ENCODE measurements at regions of chr3 and their contacts with region 1.

Region 1: DNA sequence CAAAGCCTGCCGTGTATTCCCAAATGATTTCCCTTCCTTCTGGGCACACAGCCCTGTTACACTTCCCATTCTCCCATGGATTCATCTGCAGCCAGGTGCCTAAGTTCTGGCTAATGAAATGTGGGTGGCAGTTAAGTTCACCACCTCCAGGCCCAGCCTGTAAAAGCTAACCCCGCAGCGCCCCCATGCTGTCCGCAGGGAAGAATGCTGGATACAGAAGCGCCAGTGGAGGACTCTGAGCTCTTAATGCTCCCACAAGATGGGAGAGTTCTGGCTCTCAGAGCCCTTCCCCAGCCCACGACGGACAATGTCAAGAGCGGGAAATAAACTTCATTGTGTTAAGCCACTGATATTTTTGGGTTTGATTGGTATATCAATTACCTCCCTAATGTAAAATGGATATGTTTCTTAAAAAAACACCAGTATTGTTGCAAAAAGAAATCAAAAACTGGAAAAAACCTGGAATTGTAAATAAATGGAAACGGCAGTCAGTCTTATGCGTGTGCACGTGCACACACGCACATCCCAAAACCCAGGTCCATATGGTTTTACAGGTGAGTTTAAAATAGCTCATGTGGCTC is 37.7 kb upstream of the FGD5 start:
- DNase-seq: peak; percentile 62
- H3K4me3 Mint-ChIP-seq: no peak overlapping the region
- H3K27ac Mint-ChIP-seq: no peak overlapping the region
- H3K4me1 Mint-ChIP-seq: no peaks in the 10 kb centered on the region
- H3K27me3 Mint-ChIP-seq: peaks cover 40% of the 10 kb centered on the region

Region 2: GRCh38 chr3:14633819-14634424 is 147.1 kb before region 1 on chr3:
- CTCF ChIA-PET with region 1: interaction called, 20 read pairs
- DNase-seq: peak; percentile 69
- H3K4me3 Mint-ChIP-seq: no peak overlapping the region
- H3K27ac Mint-ChIP-seq: peak overlapping the region; percentile 56
- H3K4me1 Mint-ChIP-seq: no peaks in the 10 kb centered on the region
- H3K27me3 Mint-ChIP-seq: peaks cover 42% of the 10 kb centered on the region

Region 3: GRCh38 chr3:14672588-14672987 is 108.4 kb before region 1 on chr3:
- CTCF ChIA-PET with region 1: interaction called, 20 read pairs
- DNase-seq: no peak
- H3K4me3 Mint-ChIP-seq: no peak overlapping the region
- H3K27ac Mint-ChIP-seq: no peak overlapping the region
- H3K4me1 Mint-ChIP-seq: no peaks in the 10 kb centered on the region
- H3K27me3 Mint-ChIP-seq: no peaks in the 10 kb centered on the region

Region 4: DNA sequence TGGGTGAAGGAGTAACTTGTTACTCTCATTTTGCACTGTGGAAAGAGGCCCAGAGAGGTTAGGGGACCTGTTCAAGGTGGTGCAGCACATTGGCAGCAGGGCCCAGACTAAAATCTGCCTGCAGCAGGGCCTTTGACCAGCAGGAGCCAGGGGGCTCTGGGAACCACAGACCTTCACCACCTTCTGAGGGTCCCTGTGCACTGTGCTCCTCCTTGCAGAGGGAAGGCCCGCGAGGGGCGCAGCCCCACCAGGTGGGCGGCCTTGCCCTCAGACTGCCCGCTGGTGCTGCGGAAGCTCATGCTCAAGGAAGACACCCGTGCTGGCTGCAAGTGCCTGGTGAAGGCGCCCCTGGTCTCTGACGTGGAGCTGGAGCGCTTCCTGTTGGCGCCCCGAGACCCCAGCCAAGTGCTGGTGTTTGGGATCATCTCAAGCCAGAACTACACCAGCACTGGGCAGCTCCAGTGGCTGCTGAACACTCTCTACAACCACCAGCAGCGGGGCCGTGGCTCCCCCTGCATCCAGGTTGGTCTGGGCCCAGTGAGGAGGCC is 23.8 kb before region 1 on chr3:
- CTCF ChIA-PET with region 1: no interaction called
- DNase-seq: no peak
- H3K4me3 Mint-ChIP-seq: no peak overlapping the region
- H3K27ac Mint-ChIP-seq: no peak overlapping the region
- H3K4me1 Mint-ChIP-seq: peaks cover 10% of the 10 kb centered on the region
- H3K27me3 Mint-ChIP-seq: peaks cover 14% of the 10 kb centered on the region

Region 5: DNA sequence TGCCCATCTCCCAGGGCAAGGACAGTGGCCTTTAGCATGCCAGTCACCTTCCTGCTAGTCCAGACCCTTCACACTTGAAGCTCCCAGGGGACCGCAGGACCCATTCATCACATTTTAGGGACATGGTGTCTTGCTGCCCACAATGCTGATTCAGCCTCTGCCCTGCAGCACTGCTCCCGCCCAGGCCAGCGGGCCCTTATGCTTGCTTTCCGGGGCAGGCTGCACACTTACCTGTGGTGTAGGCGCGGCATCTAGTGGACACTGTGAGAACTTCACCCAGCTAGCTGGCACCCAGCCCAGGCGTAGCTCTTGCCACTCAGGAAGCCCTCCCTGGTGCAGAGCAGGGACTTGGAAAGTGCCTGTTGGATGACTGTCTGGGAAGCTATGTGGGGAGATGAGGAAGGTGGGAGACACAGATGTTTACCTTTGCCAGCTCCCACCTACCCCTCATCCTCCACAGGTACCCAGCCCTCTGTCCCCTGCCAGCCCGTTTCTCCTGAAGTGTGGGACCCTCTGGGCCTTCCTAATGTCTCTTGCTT is 140.1 kb after region 1 on chr3:
- CTCF ChIA-PET with region 1: interaction called, 11 read pairs
- DNase-seq: peak; percentile 88
- H3K4me3 Mint-ChIP-seq: no peak overlapping the region
- H3K27ac Mint-ChIP-seq: no peak overlapping the region
- H3K4me1 Mint-ChIP-seq: no peaks in the 10 kb centered on the region
- H3K27me3 Mint-ChIP-seq: peaks cover 27% of the 10 kb centered on the region

Measured in activated naive CD4-positive, alpha-beta T cell treated with anti-CD3 and anti-CD28 coated beads, Interleukin-2, amount 10 ng/mL, durations not matched to agents 7 days and 5 days (primary cell).